ENCODE measurements at regions of chr9 and their contacts with region 1.

Region 1: DNA sequence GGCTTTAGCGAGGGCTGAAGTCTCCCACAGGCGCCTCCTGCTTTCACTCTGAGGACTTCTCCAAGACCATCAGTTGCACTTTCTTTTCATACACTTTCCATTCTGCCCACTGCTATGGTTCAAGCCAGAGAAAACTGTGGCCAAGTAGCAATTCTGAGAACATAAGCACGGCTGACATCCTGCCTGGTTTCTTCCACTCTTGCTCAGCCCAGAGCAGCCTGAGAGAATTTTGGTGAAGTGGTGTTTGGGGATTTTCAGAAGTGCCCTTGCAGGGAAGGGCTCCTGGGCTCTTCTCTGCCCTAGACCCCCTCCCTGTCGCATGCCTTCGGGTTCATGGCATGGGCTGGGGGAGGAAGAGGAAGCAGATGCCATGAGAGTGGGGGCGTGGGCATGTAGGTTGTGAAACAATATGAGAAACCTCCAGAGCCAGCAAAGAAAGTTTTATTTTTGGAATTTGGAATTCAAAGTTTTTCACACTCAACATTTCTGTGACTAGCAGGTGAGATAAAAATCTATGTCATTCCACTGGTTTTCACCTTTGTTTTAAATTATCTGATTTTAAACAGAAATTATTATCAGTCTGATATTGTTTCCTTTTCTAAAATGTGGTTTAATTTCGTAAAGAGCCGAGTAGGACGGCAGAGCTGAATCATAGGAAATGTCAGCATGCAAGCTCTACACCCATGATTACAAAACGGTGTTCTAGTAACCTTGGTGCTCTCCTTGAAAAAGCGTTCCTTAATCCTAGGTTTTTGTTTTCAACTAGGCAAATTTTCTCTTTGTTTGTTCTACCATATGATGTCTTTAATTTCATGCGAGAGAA is 27.8 kb upstream of the TNFSF8 start:
- DNase-seq: peak; percentile 85
- H3K4me3 Mint-ChIP-seq: peak overlapping the region; percentile 72
- H3K27ac Mint-ChIP-seq: peak overlapping the region; percentile 98
- H3K4me1 Mint-ChIP-seq: peaks cover 59% of the 10 kb centered on the region
- H3K27me3 Mint-ChIP-seq: no peaks in the 10 kb centered on the region

Region 2: GRCh38 chr9:114696814-114697544 is 261.3 kb before region 1 on chr9:
- intact Hi-C with region 1: loop called (anchors 1 kb)
- DNase-seq: peak; percentile 92
- H3K4me3 Mint-ChIP-seq: peak overlapping the region; percentile 79
- H3K27ac Mint-ChIP-seq: peak overlapping the region; percentile 100
- H3K4me1 Mint-ChIP-seq: peaks cover 79% of the 10 kb centered on the region
- H3K27me3 Mint-ChIP-seq: no peaks in the 10 kb centered on the region

Region 3: DNA sequence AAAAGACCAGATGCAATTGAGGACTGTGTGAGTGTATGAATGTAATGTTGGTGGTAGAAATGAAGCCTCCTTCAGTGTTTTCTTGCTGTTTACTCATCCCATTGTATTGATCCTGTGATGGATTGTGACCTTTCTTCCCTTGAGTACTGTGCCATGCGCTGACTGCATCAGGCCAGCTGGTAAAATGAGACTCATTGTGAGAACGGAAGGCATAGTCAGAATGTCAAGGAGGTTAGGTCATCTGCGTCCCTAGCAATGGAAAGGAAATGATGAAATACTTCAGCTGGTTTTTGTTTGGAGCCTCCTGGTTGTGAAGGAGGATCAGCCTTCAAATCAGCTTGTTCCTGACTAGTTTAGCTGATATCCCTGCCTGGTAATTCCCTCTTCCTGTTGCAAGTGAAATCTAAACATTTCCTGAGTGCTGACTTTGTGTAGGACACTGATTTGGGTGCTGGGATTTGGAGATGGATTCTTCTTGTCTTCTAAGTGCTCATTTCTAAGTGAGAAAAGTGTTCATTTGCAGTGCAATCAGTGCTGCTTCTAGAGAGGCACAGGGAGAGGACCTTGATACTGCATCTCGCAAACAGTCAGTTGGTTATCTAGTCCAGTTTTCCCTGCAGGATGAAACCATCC is 63.3 kb before region 1 on chr9:
- intact Hi-C with region 1: loop called (anchors 2 kb)
- DNase-seq: peak; percentile 83
- H3K4me3 Mint-ChIP-seq: peak overlapping the region; percentile 32
- H3K27ac Mint-ChIP-seq: peak overlapping the region; percentile 89
- H3K4me1 Mint-ChIP-seq: peaks cover 48% of the 10 kb centered on the region
- H3K27me3 Mint-ChIP-seq: no peaks in the 10 kb centered on the region

Region 4: GRCh38 chr9:114930056-114930812 is 28.0 kb before region 1 on chr9 and contains the start of gene TNFSF8:
- intact Hi-C with region 1: loop called (anchors 1 kb)
- DNase-seq: peak; percentile 94
- H3K4me3 Mint-ChIP-seq: peak within 1 kb of the TSS; percentile 90
- H3K27ac Mint-ChIP-seq: peak within 1 kb of the TSS; percentile 99
- H3K4me1 Mint-ChIP-seq: peaks cover 59% of the 10 kb centered on the region
- H3K27me3 Mint-ChIP-seq: no peaks in the 10 kb centered on the region
- total RNA-seq, gene TNFSF8: 148 and 150 TPM in 2 replicates

Region 5: GRCh38 chr9:115008536-115009270 is 50.5 kb after region 1 on chr9:
- intact Hi-C with region 1: loop called (anchors 1 kb)
- DNase-seq: peak; percentile 70
- H3K4me3 Mint-ChIP-seq: no peak overlapping the region
- H3K27ac Mint-ChIP-seq: no peak overlapping the region
- H3K4me1 Mint-ChIP-seq: peaks cover 74% of the 10 kb centered on the region
- H3K27me3 Mint-ChIP-seq: no peaks in the 10 kb centered on the region

Region 6: DNA sequence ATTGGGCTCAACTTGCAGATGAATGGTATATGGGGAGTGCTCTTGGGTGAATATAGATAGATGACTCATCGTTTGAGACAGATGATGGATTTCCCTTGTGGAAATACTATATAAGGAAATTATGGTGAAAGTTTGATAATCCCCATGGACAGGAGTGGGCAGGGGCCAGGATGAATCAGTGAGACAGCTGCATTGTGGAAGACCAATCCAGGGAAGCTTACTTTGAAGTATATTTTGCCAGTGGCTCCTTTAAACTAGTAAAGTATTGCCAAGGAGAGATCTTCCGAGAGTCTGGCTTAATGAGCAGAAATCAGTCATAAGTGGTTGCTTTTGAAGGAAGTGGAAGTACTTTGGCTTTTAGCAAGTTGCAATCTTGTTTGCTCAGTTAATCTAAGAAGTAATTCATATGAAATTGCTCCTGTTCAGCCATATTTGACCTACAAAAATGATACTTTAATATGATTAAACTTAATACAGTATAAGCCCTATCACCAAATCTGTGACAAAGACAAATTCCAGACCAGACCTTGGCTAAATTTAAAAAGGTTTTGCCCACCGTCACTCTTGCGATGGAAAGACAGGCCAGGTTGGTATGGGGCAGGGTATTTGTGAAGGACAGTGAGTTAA is 169.1 kb after region 1 on chr9:
- intact Hi-C with region 1: no loop called
- DNase-seq: no peak
- H3K4me3 Mint-ChIP-seq: no peak overlapping the region
- H3K27ac Mint-ChIP-seq: no peak overlapping the region
- H3K4me1 Mint-ChIP-seq: no peaks in the 10 kb centered on the region
- H3K27me3 Mint-ChIP-seq: peaks cover 25% of the 10 kb centered on the region

Region 7: DNA sequence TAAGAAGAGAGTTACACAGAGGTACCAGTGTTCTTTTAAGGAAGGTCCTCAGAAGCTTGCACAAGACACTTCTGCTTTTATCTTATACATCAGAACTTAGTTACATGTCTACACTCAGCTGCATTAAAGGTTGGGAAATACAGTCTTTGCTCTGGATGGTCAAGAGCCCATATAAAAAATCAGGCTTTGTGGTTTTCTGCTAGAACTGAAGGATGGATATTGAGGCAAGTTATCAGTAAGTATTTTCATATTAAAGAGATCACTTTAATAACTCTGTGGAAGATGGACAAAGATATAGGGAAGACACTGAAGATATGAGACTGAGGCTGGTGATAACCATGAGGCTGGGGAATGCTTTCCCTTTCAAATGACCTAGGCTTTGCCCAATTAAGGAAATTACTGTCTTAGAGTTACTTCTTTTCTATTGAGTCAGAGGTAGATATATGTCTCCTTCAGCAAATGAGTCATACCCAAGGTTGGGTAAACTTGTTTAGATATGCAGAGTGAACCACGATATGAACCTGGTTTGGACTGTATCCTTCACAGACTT is 246.7 kb after region 1 on chr9:
- intact Hi-C with region 1: loop called (anchors 1 kb)
- DNase-seq: no peak
- H3K4me3 Mint-ChIP-seq: no peak overlapping the region
- H3K27ac Mint-ChIP-seq: peak overlapping the region; percentile 51
- H3K4me1 Mint-ChIP-seq: peaks cover 37% of the 10 kb centered on the region
- H3K27me3 Mint-ChIP-seq: peaks cover 14% of the 10 kb centered on the region

Measured in activated CD4-positive, alpha-beta T cell treated with anti-CD3 and anti-CD28 coated beads, Interleukin-2, amount 10 ng/mL, durations not matched to agents 24 days and 14 days (primary cell).